ENCODE measurements at regions of chr11 and their contacts with region 1.

Region 1: GRCh38 chr11:68798221-68798813 is 43.4 kb downstream of the CPT1A start:
- DNase-seq: peak; percentile 66
- ATAC-seq: peak; percentile 56
- H3K4me3 Mint-ChIP-seq: no peak overlapping the region
- H3K27ac Mint-ChIP-seq: no peak overlapping the region
- H3K4me1 Mint-ChIP-seq: no peaks in the 10 kb centered on the region
- H3K27me3 Mint-ChIP-seq: no peaks in the 10 kb centered on the region
- CTCF ChIP-seq: peak; percentile 92

Region 2: DNA sequence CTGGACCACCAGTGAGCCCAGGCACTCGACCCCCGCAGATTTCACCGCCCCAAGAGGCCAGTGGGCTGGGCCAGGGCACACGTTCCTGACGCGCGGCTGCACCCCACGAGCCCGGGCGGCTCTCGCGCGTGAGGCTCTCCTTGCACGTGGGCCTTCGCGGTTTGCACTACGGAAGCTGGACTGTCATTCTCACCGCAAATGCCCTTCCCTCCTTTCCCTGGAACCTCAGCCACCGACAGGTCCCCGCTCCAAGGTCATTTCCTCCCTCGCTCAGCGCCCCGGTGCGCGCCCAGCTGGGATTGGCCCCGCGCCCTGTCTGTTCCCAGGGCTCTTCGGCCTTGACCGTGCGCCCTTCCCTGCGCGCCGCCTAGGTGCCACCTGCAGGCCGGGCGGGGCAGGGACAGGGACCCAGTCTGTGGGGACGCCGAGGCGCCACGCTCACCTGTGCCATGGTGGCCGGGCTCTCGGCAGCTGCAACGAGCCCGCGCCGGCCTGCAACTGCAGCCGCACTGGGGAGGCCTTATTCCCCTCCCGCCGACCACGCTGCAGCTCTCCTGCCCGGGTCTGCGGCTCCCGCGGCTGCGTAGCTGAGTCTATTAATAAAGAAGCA is 45.5 kb after region 1 on chr11:
- CTCF ChIA-PET with region 1: interaction called, 28 read pairs
- POLR2A ChIA-PET with region 1: no interaction called
- intact Hi-C with region 1: no loop called
- DNase-seq: peak; percentile 80
- ATAC-seq: peak; percentile 64
- H3K4me3 Mint-ChIP-seq: peak overlapping the region; percentile 93
- H3K27ac Mint-ChIP-seq: peak overlapping the region; percentile 88
- H3K4me1 Mint-ChIP-seq: peaks cover 33% of the 10 kb centered on the region
- H3K27me3 Mint-ChIP-seq: peaks cover 2% of the 10 kb centered on the region
- CTCF ChIP-seq: peak; percentile 71

Measured in activated CD8-positive, alpha-beta T cell treated with anti-CD3 and anti-CD28 coated beads for 36 hours (primary cell).